ENCODE measurements at regions of chr15 and their contacts with region 1.

Region 1: DNA sequence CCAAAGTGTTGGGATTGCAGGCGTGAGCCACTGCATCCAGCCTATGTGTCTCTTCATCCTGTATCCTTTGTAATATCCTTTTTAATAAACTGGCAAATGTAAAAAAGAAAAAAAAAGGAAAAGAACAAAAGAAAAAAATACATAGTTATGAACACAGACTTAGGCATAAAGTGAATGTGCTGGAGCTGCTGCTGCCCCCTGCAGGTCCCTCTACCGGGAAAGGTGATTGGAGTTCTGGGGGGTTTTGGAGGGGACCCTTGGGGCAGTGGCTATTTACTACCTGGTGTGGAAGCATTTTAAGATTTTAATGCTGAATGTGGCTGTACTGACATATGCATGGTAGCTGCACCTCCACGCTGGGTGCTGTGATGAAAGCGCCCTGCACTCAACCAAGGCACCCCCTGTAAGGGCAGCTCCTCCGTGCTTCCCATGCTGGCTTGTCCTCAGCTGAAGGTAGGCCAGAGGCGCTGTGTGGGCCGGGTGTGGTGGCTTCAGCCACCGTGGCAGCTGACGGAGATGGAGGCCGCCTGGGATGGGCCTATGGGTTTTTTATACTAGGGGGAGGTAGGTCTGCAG is 49.9 kb downstream of the RPLP1 start:
- DNase-seq: peak in 1 of 2 experiments; percentile 52
- H3K4me3 ChIP-seq: no peak overlapping the region
- H3K27ac ChIP-seq: no peak overlapping the region
- H3K4me1 ChIP-seq: peaks cover 0 to 4% (median 3%) of the 10 kb centered on the region in 4 experiments; a peak in 5 of 7 replicates
- H3K27me3 ChIP-seq: no peaks in the 10 kb centered on the region
- CTCF ChIP-seq: peak in 2 of 3 experiments; percentile 39 to 42; a peak in 3 of 4 replicates
- EP300 ChIP-seq: no peak
- POLR2A ChIP-seq: no peak
- RAD21 ChIP-seq: no peak

Region 2: GRCh38 chr15:69403594-69403993 is 99.0 kb before region 1 on chr15:
- CTCF ChIA-PET with region 1: no interaction called
- POLR2A ChIA-PET with region 1: no interaction called
- DNase-seq: no peak
- H3K4me3 ChIP-seq: no peak overlapping the region
- H3K27ac ChIP-seq: no peak overlapping the region
- H3K4me1 ChIP-seq: no peaks in the 10 kb centered on the region
- H3K27me3 ChIP-seq: no peaks in the 10 kb centered on the region
- CTCF ChIP-seq: no peak
- EP300 ChIP-seq: no peak
- POLR2A ChIP-seq: no peak
- RAD21 ChIP-seq: no peak

Region 3: DNA sequence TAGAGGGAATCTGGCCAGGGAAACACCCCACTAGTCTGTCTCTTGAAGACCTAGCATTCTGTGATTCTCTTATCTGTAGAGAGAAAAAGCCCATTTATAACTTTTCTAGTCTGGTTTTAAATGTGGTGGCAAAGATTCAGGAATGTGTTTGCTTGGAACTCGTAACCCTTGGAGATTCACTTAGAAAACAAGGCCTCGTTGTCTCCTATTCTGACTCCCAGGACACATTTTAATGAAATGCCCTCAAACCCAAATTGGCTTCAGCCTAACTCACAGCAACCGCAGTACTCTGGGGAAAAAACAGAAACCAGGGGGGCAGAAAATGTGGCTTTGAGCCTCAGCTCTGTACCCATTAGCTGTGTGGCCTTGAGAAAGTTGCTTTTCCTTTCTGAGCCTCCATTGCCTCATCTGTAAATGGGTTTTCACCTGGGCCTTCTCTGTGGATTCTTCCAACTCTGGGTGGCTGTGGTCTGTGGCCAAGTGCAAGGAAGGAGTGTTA is 13.4 kb before region 1 on chr15:
- CTCF ChIA-PET with region 1: interaction called, 16 read pairs
- POLR2A ChIA-PET with region 1: no interaction called
- DNase-seq: no peak
- H3K4me3 ChIP-seq: no peak overlapping the region
- H3K27ac ChIP-seq: no peak overlapping the region
- H3K4me1 ChIP-seq: no peaks in the 10 kb centered on the region
- H3K27me3 ChIP-seq: no peaks in the 10 kb centered on the region
- CTCF ChIP-seq: no peak
- EP300 ChIP-seq: no peak
- POLR2A ChIP-seq: no peak
- RAD21 ChIP-seq: no peak

Region 4: DNA sequence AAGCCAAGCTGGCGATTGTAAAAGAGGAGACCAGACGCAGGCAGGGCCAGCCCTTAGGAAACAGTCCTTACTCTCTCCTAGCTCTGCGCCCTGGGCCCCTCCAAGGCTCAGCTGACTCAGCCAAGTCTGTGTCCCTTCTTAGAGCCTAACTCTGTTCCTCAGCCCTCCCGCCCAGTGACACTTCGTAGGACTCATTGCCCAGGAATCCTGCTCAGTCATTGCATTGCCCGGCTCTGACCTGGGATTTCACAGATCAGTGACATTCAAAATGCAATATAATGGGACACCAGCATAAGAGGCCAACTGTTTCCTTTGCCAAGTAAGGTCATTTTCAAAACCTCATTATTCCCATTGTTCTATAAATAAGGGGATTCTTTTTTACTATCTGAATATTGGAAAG is 351.0 kb after region 1 on chr15:
- CTCF ChIA-PET with region 1: no interaction called
- POLR2A ChIA-PET with region 1: no interaction called
- DNase-seq: peak in 1 of 2 experiments; percentile 21
- H3K4me3 ChIP-seq: no peak overlapping the region
- H3K27ac ChIP-seq: no peak overlapping the region
- H3K4me1 ChIP-seq: peaks cover 0 to 4% (median 0%) of the 10 kb centered on the region in 4 experiments; a peak in 1 of 7 replicates
- H3K27me3 ChIP-seq: no peaks in the 10 kb centered on the region
- CTCF ChIP-seq: no peak
- EP300 ChIP-seq: no peak
- POLR2A ChIP-seq: no peak
- RAD21 ChIP-seq: no peak